T-cell (primary cell): ENCODE measurements at regions of chr7 and their contacts with region 1.

Region 1: GRCh38 chr7:15682751-15683245 is 3.7 kb downstream of the MEOX2 start:
- DNase-seq: no peak
- ATAC-seq: no peak
- H3K4me3 ChIP-seq: no peak overlapping the region
- H3K4me3 Mint-ChIP-seq: no peak overlapping the region
- H3K27ac ChIP-seq: no peak overlapping the region
- H3K27ac Mint-ChIP-seq: no peak overlapping the region
- H3K4me1 ChIP-seq: no peaks in the 10 kb centered on the region
- H3K4me1 Mint-ChIP-seq: no peaks in the 10 kb centered on the region
- H3K27me3 ChIP-seq: peaks cover 3 to 25% of the 10 kb centered on the region in 2 experiments
- H3K27me3 Mint-ChIP-seq: peaks cover 22 to 32% of the 10 kb centered on the region in 2 donors

Region 2: DNA sequence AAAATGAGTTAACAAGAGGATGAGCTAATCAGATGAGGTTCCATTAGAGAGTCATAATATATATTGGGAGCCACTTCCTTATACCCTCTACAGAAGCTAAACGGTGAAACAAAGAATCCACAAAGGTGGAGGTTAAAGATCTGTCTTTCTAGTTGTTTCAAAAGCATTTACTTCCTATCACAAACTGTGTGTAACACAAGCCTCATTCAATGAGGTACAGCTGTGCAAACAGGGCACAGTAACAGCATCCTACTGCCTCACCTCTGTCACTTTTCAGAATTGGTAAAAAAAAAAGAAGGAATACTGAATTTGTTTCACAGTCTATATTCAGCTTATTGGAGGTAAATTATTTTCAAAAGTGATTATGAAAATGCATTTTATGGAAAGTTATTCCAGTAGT is 249.6 kb before region 1 on chr7:
- CTCF ChIA-PET with region 1: no interaction called
- POLR2A ChIA-PET with region 1: interaction called in 1 of 2 experiments, 10 read pairs
- DNase-seq: no peak
- ATAC-seq: no peak
- H3K4me3 ChIP-seq: no peak overlapping the region
- H3K4me3 Mint-ChIP-seq: no peak overlapping the region
- H3K27ac ChIP-seq: no peak overlapping the region
- H3K27ac Mint-ChIP-seq: no peak overlapping the region
- H3K4me1 ChIP-seq: no peaks in the 10 kb centered on the region
- H3K4me1 Mint-ChIP-seq: no peaks in the 10 kb centered on the region
- H3K27me3 ChIP-seq: no peaks in the 10 kb centered on the region
- H3K27me3 Mint-ChIP-seq: no peaks in the 10 kb centered on the region